Panc1 (cell line): ENCODE measurements at regions of chr1 and their contacts with region 1.

Region 1: DNA sequence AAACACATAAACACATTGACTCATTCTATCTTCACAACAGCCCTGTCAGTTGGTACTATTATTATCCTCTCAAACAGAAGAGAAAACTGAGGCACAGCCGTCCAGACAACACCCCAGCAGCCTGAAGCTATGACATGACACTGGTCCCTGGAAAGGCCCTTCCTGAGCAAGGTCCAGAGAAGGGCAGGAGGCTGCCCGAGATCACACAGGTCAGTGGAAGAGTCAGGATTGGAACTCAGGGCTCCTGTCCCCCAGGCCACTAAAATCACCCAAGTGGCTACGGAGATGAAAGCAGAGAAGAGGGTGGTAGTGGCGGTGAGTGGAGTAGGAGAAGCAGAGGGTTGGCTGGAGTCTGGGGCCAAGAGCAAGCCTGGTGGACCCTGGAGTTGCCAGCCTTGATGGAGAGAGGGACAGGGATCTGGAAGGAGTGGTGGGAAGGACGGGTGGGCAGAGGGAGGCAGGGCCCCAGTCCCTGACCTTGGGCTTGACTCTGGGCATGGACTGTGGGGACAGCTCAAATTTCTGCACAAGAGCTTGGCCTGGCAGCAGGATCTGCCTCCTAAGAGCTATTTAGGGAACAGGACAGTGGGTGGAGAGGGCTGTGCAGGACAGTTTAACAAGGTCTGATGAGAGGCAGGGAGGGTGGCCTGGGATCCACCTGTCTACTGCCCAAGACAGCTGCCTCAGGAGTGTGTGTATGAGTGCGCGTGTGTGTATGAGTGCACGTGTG is 15.8 kb downstream of the MYOM3 start:
- DNase-seq: no peak
- ATAC-seq: no peak
- H3K4me3 ChIP-seq: no peak overlapping the region
- H3K27ac ChIP-seq: no peak overlapping the region
- H3K4me1 ChIP-seq: no peaks in the 10 kb centered on the region
- H3K27me3 ChIP-seq: no peaks in the 10 kb centered on the region
- CTCF ChIP-seq: no peak

Region 2: GRCh38 chr1:24047101-24047459 is 49.1 kb before region 1 on chr1:
- CTCF ChIA-PET with region 1: no interaction called
- POLR2A ChIA-PET with region 1: interaction called, 11 read pairs
- in situ Hi-C with region 1: no loop called
- intact Hi-C with region 1: no loop called
- DNase-seq: peak; percentile 32
- ATAC-seq: peak; percentile 54; the same call in 1 of the 2 replicates
- H3K4me3 ChIP-seq: no peak overlapping the region
- H3K27ac ChIP-seq: peak overlapping the region; percentile 23; the same call in 1 of the 2 replicates
- H3K4me1 ChIP-seq: peaks cover 33% of the 10 kb centered on the region
- H3K27me3 ChIP-seq: no peaks in the 10 kb centered on the region
- CTCF ChIP-seq: no peak

Region 3: DNA sequence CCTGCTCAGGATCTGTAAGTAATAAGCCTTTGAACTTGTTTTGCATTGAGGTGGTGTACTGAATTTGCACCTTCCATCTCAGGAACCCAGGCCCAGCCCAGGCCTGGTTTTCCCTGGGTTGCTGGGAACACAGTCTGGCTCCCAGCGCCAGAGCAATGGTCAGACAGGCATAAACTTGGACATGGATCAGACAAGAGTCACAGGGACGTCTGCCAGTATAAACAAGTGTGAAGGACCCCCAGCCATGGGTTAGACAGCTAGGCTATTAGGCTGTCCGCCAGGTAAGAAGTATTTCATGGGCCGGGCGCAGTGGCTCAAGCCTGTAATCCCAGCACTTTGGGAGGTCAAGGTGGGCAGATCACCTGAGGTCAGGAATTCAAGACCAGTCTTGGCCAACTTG is 85.4 kb after region 1 on chr1:
- CTCF ChIA-PET with region 1: no interaction called
- POLR2A ChIA-PET with region 1: no interaction called
- in situ Hi-C with region 1: no loop called
- intact Hi-C with region 1: no loop called
- DNase-seq: no peak
- ATAC-seq: no peak
- H3K4me3 ChIP-seq: no peak overlapping the region
- H3K27ac ChIP-seq: no peak overlapping the region
- H3K4me1 ChIP-seq: peaks cover 4% of the 10 kb centered on the region; the same call in 1 of the 2 replicates
- H3K27me3 ChIP-seq: no peaks in the 10 kb centered on the region
- CTCF ChIP-seq: no peak